Left colon (tissue), 2 donors: ENCODE measurements at regions of chr19 and their contacts with region 1.

Region 1: GRCh38 chr19:11137542-11138384 is 17.8 kb downstream of the SPC24 start:
- DNase-seq: peak; percentile 72 to 75
- ATAC-seq: peak; percentile 67

Region 2: GRCh38 chr19:11035441-11036377 is 102.1 kb before region 1 on chr19:
- intact Hi-C with region 1: no loop called
- DNase-seq: peak; percentile 94 to 97
- ATAC-seq: peak; percentile 97

Region 3: GRCh38 chr19:11203194-11204075 is 65.7 kb after region 1 on chr19:
- intact Hi-C with region 1: loop called (anchors 5 to 10 kb)
- DNase-seq: peak; percentile 66 to 83
- ATAC-seq: peak; percentile 47